ENCODE measurements at regions of chr5 and their contacts with region 1.

Region 1: DNA sequence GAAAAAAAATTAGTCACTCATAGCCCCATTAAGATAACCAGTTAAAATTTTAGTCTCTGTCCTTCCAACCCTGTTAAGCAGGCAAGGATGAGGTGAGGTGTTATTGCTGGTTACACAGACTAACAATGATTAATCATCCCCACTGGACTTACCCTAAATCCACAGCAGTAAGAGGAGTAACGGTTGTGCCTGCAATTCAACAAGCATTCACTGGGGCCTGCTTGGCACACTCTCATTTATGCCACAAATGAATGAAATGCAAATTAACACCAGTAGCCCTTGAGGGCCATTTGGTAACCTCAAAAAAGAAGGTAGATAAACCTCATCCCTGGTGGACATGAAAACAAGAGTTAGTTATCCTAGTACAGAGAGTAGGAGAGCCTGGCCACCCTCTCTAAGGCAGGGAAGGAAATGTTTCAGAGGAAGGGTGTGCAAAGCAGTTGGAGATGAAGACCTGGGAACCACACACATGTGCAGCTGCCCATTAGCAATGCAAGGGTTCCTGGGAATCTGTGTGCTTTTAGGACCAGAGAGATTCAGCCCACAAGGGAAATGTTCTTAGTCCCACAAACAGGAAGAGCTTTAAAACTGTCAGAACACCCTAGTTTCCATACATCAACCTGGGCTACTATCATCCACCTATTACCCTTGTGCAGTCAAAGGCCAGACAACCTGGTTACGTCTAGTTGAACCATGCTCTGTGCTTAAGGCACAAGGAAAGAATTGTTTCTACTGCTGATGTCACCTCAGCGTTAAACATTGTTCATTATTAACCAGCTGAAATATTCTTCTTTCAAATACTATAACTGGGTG is 7.7 kb downstream of the LHFPL2 start:
- DNase-seq: peak; percentile 87
- ATAC-seq: peak; percentile 89
- H3K4me3 ChIP-seq: peak overlapping the region in 1 of 3 experiments; percentile 20; a peak in 1 of 6 replicates
- H3K27ac ChIP-seq: peak overlapping the region; percentile 84
- H3K4me1 ChIP-seq: peaks cover 75% of the 10 kb centered on the region
- H3K27me3 ChIP-seq: no peaks in the 10 kb centered on the region
- CTCF ChIP-seq: no peak
- EP300 ChIP-seq: peak in 1 of 2 experiments; percentile 45; a peak in 2 of 4 replicates
- POLR2A ChIP-seq: peak in 1 of 2 experiments; percentile 56; a peak in 2 of 4 replicates
- RAD21 ChIP-seq: no peak

Region 2: GRCh38 chr5:78600687-78601414 is 40.0 kb before region 1 on chr5:
- CTCF ChIA-PET with region 1: no interaction called
- POLR2A ChIA-PET with region 1: interaction called, 6 read pairs
- in situ Hi-C with region 1: no loop called
- intact Hi-C with region 1: loop called (anchors 5 kb)
- DNase-seq: no peak
- ATAC-seq: peak; percentile 25; the same call in 1 of the 3 replicates
- H3K4me3 ChIP-seq: peak overlapping the region in 1 of 3 experiments; percentile 26; a peak in 1 of 6 replicates
- H3K27ac ChIP-seq: peak overlapping the region; percentile 76
- H3K4me1 ChIP-seq: peaks cover 100% of the 10 kb centered on the region
- H3K27me3 ChIP-seq: no peaks in the 10 kb centered on the region
- CTCF ChIP-seq: no peak
- EP300 ChIP-seq: no peak
- POLR2A ChIP-seq: no peak
- RAD21 ChIP-seq: no peak

Region 3: GRCh38 chr5:78611126-78611605 is 29.7 kb before region 1 on chr5:
- CTCF ChIA-PET with region 1: no interaction called
- POLR2A ChIA-PET with region 1: no interaction called
- in situ Hi-C with region 1: no loop called
- intact Hi-C with region 1: no loop called
- DNase-seq: no peak
- ATAC-seq: peak; percentile 90
- H3K4me3 ChIP-seq: no peak overlapping the region
- H3K27ac ChIP-seq: no peak overlapping the region
- H3K4me1 ChIP-seq: peaks cover 81% of the 10 kb centered on the region
- H3K27me3 ChIP-seq: no peaks in the 10 kb centered on the region
- CTCF ChIP-seq: no peak
- EP300 ChIP-seq: no peak
- POLR2A ChIP-seq: no peak
- RAD21 ChIP-seq: no peak